IMR-90 (cell line): ENCODE measurements at regions of chr20 and their contacts with region 1.

Region 1: GRCh38 chr20:22675341-22675740 is 91.0 kb upstream of the FOXA2 start:
- DNase-seq: no peak
- ATAC-seq: no peak
- H3K4me3 ChIP-seq: no peak overlapping the region
- H3K27ac ChIP-seq: no peak overlapping the region
- H3K4me1 ChIP-seq: no peaks in the 10 kb centered on the region
- H3K27me3 ChIP-seq: no peaks in the 10 kb centered on the region; the same call in 1 of the 2 replicates
- CTCF ChIP-seq: no peak
- POLR2A ChIP-seq: no peak
- RAD21 ChIP-seq: no peak

Region 2: GRCh38 chr20:22339091-22339881 is 336.1 kb before region 1 on chr20:
- CTCF ChIA-PET with region 1: no interaction called
- POLR2A ChIA-PET with region 1: no interaction called
- dilution Hi-C with region 1: loop called (anchors 10 kb)
- in situ Hi-C with region 1: loop called (anchors 5 kb)
- intact Hi-C with region 1: no loop called
- DNase-seq: peak; percentile 63
- ATAC-seq: peak; percentile 74
- H3K4me3 ChIP-seq: no peak overlapping the region
- H3K27ac ChIP-seq: no peak overlapping the region
- H3K4me1 ChIP-seq: no peaks in the 10 kb centered on the region
- H3K27me3 ChIP-seq: no peaks in the 10 kb centered on the region
- CTCF ChIP-seq: peak; percentile 68
- POLR2A ChIP-seq: no peak
- RAD21 ChIP-seq: peak; percentile 70